Right lobe of liver (tissue), 6 donors: ENCODE measurements at regions of chr12 and their contacts with region 1.

Region 1: GRCh38 chr12:49783917-49784676 is 42.7 kb downstream of the TMBIM6 start:
- DNase-seq: no peak
- ATAC-seq: peak; percentile 53 to 77 (median 58)
- H3K4me3 ChIP-seq: no peak overlapping the region
- H3K27ac ChIP-seq: no peak overlapping the region
- H3K4me1 ChIP-seq: no peaks in the 10 kb centered on the region
- H3K27me3 ChIP-seq: no peaks in the 10 kb centered on the region
- CTCF ChIP-seq: no peak
- POLR2A ChIP-seq: no peak

Region 2: GRCh38 chr12:49388682-49389386 is 395.3 kb before region 1 on chr12:
- intact Hi-C with region 1: no loop called
- DNase-seq: peak in 1 of 3 donors; percentile 30
- ATAC-seq: peak; percentile 32 to 44 (median 32)
- H3K4me3 ChIP-seq: no peak overlapping the region
- H3K27ac ChIP-seq: no peak overlapping the region
- H3K4me1 ChIP-seq: no peaks in the 10 kb centered on the region
- H3K27me3 ChIP-seq: no peaks in the 10 kb centered on the region
- CTCF ChIP-seq: no peak
- POLR2A ChIP-seq: no peak

Region 3: GRCh38 chr12:49842519-49843352 is 58.6 kb after region 1 on chr12 and contains the start of gene BCDIN3D:
- intact Hi-C with region 1: loop called in 1 of 2 experiments (anchors 5 kb)
- DNase-seq: peak; percentile 93 to 95 (median 93)
- ATAC-seq: peak; percentile 97 to 98 (median 98)
- H3K4me3 ChIP-seq: peak within 1 kb of the TSS; percentile 57 to 73 (median 68)
- H3K27ac ChIP-seq: peak within 1 kb of the TSS; percentile 51 to 71 (median 70)
- H3K4me1 ChIP-seq: peaks cover 0 to 10% (median 2%) of the 10 kb centered on the region in 4 donors
- H3K27me3 ChIP-seq: no peaks in the 10 kb centered on the region
- CTCF ChIP-seq: peak in 1 of 4 donors; percentile 17
- POLR2A ChIP-seq: peak; percentile 80
- total RNA-seq, gene BCDIN3D: 1.6 to 3.6 (median 2.6) TPM

Region 4: GRCh38 chr12:49893753-49894752 is 110.0 kb after region 1 on chr12:
- intact Hi-C with region 1: no loop called
- DNase-seq: peak in 1 of 3 donors; percentile 35
- ATAC-seq: no peak
- H3K4me3 ChIP-seq: no peak overlapping the region
- H3K27ac ChIP-seq: no peak overlapping the region
- H3K4me1 ChIP-seq: no peaks in the 10 kb centered on the region
- H3K27me3 ChIP-seq: no peaks in the 10 kb centered on the region
- CTCF ChIP-seq: no peak
- POLR2A ChIP-seq: no peak